ENCODE measurements at regions of chr2 and their contacts with region 1.

Region 1: GRCh38 chr2:39179974-39180970 is 59.4 kb upstream of the SOS1 start:
- DNase-seq: peak; percentile 82 to 88
- H3K4me3 ChIP-seq: no peak overlapping the region
- H3K27ac ChIP-seq: no peak overlapping the region
- H3K4me1 ChIP-seq: peaks cover 14% of the 10 kb centered on the region
- H3K27me3 ChIP-seq: no peaks in the 10 kb centered on the region
- CTCF ChIP-seq: no peak

Region 2: DNA sequence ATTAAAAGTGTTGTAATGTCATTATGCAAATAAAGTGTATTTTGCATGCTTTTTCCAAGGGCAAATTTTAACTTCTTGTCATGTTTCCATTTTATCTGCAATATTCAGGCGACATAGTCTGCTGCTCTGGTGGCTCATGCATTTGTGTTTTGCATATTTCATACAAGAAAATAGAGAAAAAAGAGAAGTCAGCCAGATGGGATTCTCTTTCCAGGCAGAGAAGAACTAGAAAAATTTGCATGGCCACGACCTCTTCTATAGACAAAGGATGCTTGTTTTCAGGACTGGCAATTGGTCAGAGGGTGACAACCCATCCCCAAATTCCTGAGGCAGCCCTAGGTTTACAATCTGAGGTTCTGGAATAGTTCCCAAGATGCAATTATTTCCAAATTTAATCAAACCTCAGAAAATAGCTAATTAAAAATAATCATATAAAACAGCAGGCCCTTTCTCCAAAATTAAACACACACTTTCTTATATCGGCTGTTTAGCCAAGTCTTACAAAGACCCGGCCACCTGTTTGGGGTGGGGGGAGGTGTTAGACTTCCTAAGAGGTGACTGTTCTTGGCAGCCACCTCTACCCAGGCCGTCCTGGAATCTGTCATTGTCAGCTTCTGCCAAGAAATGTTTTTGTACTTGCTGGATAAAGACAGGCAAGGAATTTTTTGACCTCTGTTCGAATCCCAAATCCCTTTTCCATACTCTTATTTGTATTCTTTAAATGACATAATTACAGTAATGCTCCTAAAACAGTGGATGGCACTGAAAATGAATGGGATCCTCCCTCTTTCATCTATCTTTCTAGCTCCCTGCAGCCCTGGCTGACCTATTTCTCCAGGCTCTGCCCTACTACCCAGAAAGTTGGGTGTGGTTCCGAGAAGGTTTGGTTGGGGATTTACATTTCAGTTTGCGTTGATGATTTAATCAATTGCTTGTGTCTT is 38.7 kb before region 1 on chr2:
- CTCF ChIA-PET with region 1: no interaction called
- POLR2A ChIA-PET with region 1: no interaction called
- intact Hi-C with region 1: loop called (anchors 5 kb)
- DNase-seq: peak; percentile 44 to 61
- H3K4me3 ChIP-seq: no peak overlapping the region
- H3K27ac ChIP-seq: no peak overlapping the region
- H3K4me1 ChIP-seq: peaks cover 39% of the 10 kb centered on the region
- H3K27me3 ChIP-seq: no peaks in the 10 kb centered on the region
- CTCF ChIP-seq: no peak